ENCODE measurements at regions of chr13 and their contacts with region 1.

Region 1: DNA sequence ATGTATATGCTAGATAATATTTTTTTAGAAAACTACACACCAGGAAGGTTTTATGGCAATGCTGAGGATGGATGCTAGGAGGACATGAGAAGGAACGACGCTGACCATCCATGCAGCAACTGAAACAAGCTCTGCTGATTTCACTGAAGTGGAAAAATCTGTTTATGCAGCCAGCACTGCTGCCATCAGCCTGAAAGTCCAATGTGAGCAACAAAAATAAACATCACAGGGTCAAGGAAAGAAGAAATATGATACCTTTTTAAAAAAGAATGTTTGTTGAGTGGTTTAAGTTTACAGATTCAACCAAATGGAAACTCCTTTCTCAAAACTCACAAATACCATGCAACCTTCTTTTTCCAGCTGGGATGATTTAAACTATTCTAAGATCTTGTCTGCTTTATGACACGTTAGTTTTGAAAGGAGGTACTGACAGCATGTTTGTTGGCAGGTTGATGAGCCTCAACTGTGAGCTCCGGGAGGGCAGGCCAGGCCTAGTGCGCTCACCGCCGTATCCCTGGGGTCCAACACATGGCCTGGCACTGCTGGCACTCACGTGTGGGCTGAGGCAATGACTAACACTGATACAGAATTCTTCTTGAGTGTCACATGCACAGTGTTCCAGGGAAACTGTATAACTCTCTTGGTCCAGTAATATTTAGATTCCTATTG is 46.8 kb downstream of the LATS2 start:
- DNase-seq: no peak
- H3K4me3 Mint-ChIP-seq: no peak overlapping the region
- H3K27ac Mint-ChIP-seq: no peak overlapping the region
- H3K4me1 Mint-ChIP-seq: peaks cover 35% of the 10 kb centered on the region
- H3K27me3 Mint-ChIP-seq: no peaks in the 10 kb centered on the region

Region 2: DNA sequence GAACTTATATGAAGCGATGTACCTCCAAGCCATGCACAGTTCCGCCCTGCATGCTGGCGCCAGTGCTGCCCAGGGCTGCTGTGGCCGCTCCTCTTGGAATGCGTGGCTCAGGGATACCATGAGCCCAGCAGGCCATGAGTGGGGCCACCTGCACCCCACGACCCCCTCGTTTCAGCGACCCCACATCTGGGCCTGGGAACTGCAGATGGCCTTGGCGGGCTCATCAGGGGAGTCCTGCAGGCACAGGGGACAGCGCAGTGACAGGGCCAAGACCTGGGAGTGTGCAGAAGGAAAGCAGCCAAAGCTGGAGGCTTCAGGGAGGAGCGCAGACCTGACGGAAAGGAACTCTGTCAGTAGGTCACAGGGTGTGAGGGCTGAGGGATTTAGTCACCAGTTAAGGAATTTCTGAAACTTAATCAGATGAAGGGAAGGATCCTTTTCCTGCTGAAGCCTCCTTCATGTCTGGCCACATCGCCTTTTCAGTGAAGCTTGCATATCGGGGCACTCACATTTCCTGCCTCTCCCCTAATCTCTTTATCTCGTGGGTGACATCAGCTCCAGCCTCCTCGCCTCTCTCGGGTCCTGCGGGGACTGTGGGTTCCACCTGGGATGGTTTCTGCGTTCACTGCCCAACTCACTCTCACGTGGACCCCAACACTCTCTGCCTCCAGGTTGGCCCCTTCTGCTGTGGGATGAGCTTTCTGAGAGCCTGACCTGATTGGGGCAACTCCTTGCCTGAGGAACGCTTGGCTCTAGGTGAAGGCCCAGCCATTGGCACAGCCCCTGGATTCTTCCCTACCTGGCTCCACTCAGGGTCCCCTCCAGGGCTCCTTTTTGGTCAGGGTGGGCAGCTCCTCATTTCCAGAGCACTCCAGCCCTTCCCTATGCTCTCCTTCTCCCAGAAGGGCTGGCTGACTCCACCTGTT is 612.4 kb before region 1 on chr13:
- intact Hi-C with region 1: no loop called
- DNase-seq: no peak
- H3K4me3 Mint-ChIP-seq: no peak overlapping the region
- H3K27ac Mint-ChIP-seq: no peak overlapping the region
- H3K4me1 Mint-ChIP-seq: peaks cover 26% of the 10 kb centered on the region
- H3K27me3 Mint-ChIP-seq: peaks cover 2% of the 10 kb centered on the region

Region 3: GRCh38 chr13:20754009-20754408 is 260.6 kb before region 1 on chr13:
- intact Hi-C with region 1: no loop called
- DNase-seq: no peak
- H3K4me3 Mint-ChIP-seq: no peak overlapping the region
- H3K27ac Mint-ChIP-seq: no peak overlapping the region
- H3K4me1 Mint-ChIP-seq: no peaks in the 10 kb centered on the region
- H3K27me3 Mint-ChIP-seq: no peaks in the 10 kb centered on the region

Region 4: GRCh38 chr13:20814224-20814910 is 200.3 kb before region 1 on chr13:
- intact Hi-C with region 1: no loop called
- DNase-seq: no peak
- H3K4me3 Mint-ChIP-seq: no peak overlapping the region
- H3K27ac Mint-ChIP-seq: no peak overlapping the region
- H3K4me1 Mint-ChIP-seq: peaks cover 6% of the 10 kb centered on the region
- H3K27me3 Mint-ChIP-seq: no peaks in the 10 kb centered on the region

Region 5: GRCh38 chr13:21034603-21035191 is 20.1 kb after region 1 on chr13:
- intact Hi-C with region 1: no loop called
- DNase-seq: no peak
- H3K4me3 Mint-ChIP-seq: no peak overlapping the region
- H3K27ac Mint-ChIP-seq: no peak overlapping the region
- H3K4me1 Mint-ChIP-seq: peaks cover 12% of the 10 kb centered on the region
- H3K27me3 Mint-ChIP-seq: peaks cover 1% of the 10 kb centered on the region

Region 6: DNA sequence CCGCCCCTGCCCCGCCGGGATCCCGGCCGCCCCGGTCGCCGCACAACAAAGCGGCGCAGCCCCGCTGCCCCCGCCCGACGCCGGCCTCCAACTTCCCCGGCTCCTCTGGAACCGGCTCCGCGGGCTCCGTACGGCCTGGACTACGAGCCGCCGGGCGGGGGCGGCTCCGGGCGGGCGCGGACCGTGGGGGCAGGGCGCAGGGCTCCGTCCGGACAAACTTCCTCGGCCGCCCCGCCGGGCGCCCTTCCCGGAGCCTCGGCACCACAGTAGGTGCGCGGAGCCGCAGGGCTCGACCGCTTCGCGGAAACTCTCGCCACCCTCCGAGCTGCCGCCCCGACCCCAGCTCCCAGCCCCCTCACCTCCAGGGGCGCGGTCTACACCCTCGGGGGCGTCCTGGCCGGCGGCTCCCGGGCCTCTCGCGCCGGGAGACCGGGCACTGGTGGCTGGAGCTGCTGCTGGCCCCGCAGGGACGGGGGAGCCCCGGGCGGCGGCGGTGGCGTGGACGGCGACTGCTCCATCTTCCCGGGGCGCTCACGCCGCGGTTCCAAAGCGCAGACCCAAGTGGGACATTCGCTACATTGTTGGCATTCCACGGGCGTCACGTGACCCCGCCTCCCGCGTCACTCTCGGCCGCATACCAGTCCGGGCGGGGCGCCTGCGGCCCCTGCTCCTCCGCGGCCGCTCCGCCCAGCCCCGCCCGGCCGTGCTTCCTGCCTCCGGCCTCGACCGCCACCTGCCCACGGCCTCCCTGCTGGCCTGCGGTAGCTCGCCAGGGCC is 46.5 kb after region 1 on chr13 and contains the start of gene LATS2:
- intact Hi-C with region 1: loop called (anchors 1 kb)
- DNase-seq: peak; percentile 50
- H3K4me3 Mint-ChIP-seq: peak within 1 kb of the TSS; percentile 75
- H3K27ac Mint-ChIP-seq: peak within 1 kb of the TSS; percentile 31
- H3K4me1 Mint-ChIP-seq: no peaks in the 10 kb centered on the region
- H3K27me3 Mint-ChIP-seq: peaks cover 56% of the 10 kb centered on the region
- total RNA-seq, gene LATS2: 2.2 and 2.5 TPM in 2 replicates

Region 7: DNA sequence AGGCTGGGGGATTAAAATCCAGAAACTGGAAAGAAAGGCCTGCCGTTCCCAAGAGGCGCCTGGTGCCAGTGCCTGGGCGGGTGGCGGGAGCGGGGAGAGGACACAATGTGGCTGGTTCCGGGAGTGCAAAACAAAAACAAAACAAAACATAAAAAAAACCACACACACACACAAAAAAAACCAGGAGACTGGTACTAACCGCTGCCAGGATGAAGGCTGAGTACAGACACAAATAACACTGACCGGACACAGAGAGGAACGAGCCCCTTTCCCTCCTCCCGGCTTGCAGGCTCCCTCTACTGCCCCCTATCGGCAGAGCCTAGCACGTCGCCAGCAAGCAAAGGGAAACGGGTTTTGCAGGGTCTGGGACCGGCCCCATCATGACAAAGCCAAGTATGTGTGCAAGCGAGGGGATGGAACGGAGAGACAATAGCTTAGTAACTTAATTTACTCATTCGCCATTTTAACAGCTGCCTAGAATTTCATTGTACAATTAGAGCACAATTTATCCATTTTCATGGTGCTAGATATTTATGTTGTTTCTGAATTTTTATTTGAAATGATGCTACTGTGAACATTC is 462.3 kb after region 1 on chr13:
- intact Hi-C with region 1: loop called (anchors 10 kb)
- DNase-seq: peak; percentile 73
- H3K4me3 Mint-ChIP-seq: peak overlapping the region; percentile 67
- H3K27ac Mint-ChIP-seq: no peak overlapping the region
- H3K4me1 Mint-ChIP-seq: peaks cover 16% of the 10 kb centered on the region
- H3K27me3 Mint-ChIP-seq: peaks cover 8% of the 10 kb centered on the region

Region 8: GRCh38 chr13:21603531-21604448 is 589.2 kb after region 1 on chr13 and contains the start of gene MICU2:
- intact Hi-C with region 1: loop called (anchors 10 kb)
- DNase-seq: peak; percentile 94
- H3K4me3 Mint-ChIP-seq: peak within 1 kb of the TSS; percentile 85
- H3K27ac Mint-ChIP-seq: peak within 1 kb of the TSS; percentile 88
- H3K4me1 Mint-ChIP-seq: peaks cover 24% of the 10 kb centered on the region
- H3K27me3 Mint-ChIP-seq: peaks cover 24% of the 10 kb centered on the region
- total RNA-seq, gene MICU2: 32.5 and 33.8 TPM in 2 replicates

Measured in activated T-helper 1 cell treated with anti-CD3 and anti-CD28 coated beads, Interleukin-12 subunit alpha, Interleukin-12 subunit beta, Interleukin-2, Interleukin-4 antibody, amounts not matched to agents 30 ng/mL and 10 ng/mL and 1 ng/mL, durations not matched to agents 14 hours and 24 hours and 36 hours (primary cell).